ENCODE measurements at regions of chr9 and their contacts with region 1.

Region 1: DNA sequence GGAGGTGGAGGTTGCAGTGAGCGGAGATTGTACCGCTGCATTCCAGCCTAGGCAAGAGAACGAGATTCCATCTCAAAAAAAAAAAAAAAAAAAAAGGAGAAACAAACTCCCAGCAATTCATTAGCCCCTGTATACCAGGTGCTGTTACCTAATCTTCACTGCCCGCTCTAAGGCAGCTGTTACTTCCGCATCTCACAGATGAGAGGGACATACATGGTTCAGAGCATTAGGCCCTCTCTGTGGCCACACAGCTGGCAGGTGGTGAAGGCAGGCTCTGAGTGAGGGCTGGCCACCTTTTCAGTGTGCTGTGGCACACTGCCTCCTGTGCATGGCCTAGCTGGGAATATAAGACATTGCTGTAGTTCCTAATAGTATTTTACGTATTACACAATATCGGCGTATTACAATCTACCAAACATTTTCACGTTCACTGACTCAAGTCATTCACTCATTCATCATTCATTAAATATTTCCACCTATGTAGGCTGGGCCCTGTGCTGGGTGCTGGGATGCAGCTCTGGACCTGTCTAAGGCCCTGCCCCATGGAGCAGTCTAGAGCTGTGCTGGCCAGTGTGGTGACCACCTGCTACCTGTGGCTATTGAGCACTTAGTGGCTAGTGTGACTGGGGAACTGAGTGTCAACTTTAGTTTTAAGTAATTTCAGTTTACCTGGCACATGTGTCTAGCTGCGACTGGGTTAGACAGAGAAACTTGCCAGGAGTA is 35.8 kb downstream of the RGS3 start:
- DNase-seq: no peak
- ATAC-seq: no peak
- H3K4me3 ChIP-seq: no peak overlapping the region
- H3K27ac ChIP-seq: no peak overlapping the region
- H3K4me1 ChIP-seq: no peaks in the 10 kb centered on the region
- H3K27me3 ChIP-seq: no peaks in the 10 kb centered on the region
- CTCF ChIP-seq: no peak

Region 2: GRCh38 chr9:112841261-112841660 is 658.1 kb before region 1 on chr9:
- intact Hi-C with region 1: no loop called
- DNase-seq: no peak
- ATAC-seq: no peak
- H3K4me3 ChIP-seq: no peak overlapping the region
- H3K27ac ChIP-seq: no peak overlapping the region
- H3K4me1 ChIP-seq: no peaks in the 10 kb centered on the region
- H3K27me3 ChIP-seq: no peaks in the 10 kb centered on the region
- CTCF ChIP-seq: no peak

Region 3: GRCh38 chr9:113530022-113530635 is 30.8 kb after region 1 on chr9:
- intact Hi-C with region 1: loop called in 1 of 2 experiments (anchors 5 kb)
- DNase-seq: no peak
- ATAC-seq: no peak
- H3K4me3 ChIP-seq: no peak overlapping the region
- H3K27ac ChIP-seq: no peak overlapping the region
- H3K4me1 ChIP-seq: peaks cover 9% of the 10 kb centered on the region
- H3K27me3 ChIP-seq: no peaks in the 10 kb centered on the region
- CTCF ChIP-seq: no peak

Region 4: GRCh38 chr9:113998525-113999255 is 499.4 kb after region 1 on chr9:
- intact Hi-C with region 1: no loop called
- DNase-seq: no peak
- ATAC-seq: no peak
- H3K4me3 ChIP-seq: no peak overlapping the region
- H3K27ac ChIP-seq: no peak overlapping the region
- H3K4me1 ChIP-seq: peaks cover 9% of the 10 kb centered on the region
- H3K27me3 ChIP-seq: no peaks in the 10 kb centered on the region
- CTCF ChIP-seq: no peak

Measured in psoas muscle (tissue), 8 donors.